GM10248 (cell line): ENCODE measurements at regions of chr20 and their contacts with region 1.

Region 1: DNA sequence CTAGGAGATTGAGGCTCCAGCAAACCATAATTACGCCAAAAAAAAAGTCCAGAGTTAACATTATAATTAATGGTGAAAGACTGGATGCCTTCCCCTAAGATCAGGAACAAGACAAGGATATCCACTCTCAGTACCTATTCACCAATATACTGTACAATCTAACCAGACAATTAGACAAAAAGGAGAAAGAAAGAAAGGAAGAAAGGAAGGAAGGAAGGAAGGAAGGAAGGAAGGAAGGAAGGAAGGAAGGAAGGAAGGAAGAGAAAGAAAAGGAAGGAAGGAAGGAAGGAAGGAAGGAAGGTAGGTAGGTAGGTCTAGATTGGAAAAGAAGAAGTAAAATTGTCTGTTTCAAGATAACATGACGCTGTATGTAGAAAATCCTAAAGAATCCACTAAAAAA is 50.7 kb downstream of the TASP1 start:
- DNase-seq: no peak
- CTCF ChIP-seq: no peak

Region 2: GRCh38 chr20:13610184-13610583 is 22.1 kb after region 1 on chr20:
- CTCF ChIA-PET with region 1: interaction called, 10 read pairs
- POLR2A ChIA-PET with region 1: no interaction called
- DNase-seq: no peak
- CTCF ChIP-seq: peak; percentile 21